Body of pancreas (tissue), 4 donors: ENCODE measurements at regions of chr17 and their contacts with region 1.

Region 1: GRCh38 chr17:77096570-77097214 is 44.1 kb upstream of the SEC14L1 start:
- DNase-seq: peak; percentile 47 to 68 (median 60)
- ATAC-seq: peak; percentile 75
- H3K4me3 ChIP-seq: no peak overlapping the region
- H3K27ac ChIP-seq: peak overlapping the region; percentile 52 to 79 (median 60)
- H3K4me1 ChIP-seq: peaks cover 49% of the 10 kb centered on the region
- H3K27me3 ChIP-seq: no peaks in the 10 kb centered on the region
- CTCF ChIP-seq: peak; percentile 40 to 87 (median 73)
- POLR2A ChIP-seq: no peak

Region 2: DNA sequence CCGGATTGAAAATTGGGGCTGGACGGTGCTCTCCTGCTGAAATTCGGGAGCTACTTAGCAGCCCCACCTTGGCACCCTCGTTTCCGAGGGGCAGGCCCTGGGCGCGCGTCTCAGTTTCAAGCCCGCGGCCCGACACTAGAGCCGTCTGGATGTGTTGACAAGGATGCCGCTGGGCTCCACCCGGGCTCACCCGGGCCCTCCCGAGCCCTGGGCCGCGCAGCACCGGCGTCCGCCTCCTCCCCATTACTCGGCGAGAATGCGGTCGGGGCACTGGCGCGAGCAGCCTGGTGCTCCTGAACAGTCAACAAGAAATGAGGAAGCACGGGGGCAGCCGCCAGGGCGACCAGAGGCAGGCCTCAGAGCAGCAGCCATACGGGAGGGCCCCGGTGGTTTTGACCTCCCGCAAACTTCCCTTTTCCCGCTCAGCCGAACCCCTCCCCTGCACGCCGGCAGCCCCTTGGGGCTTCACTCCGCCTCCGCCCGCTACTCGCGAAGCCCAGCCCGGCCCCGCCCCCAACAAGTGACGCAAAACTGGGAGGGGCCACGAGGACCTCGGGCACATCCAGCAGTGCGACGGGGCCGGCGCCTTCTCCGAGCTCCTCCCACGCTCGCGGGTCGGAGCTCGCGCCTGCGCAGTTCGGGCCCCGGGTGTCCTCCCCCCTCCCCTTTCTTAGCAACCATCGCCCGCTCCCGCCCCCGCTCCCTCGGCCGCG is 43.6 kb after region 1 on chr17:
- intact Hi-C with region 1: loop called (anchors 10 kb)
- DNase-seq: peak; percentile 99 to 100 (median 100)
- ATAC-seq: peak; percentile 95
- H3K4me3 ChIP-seq: peak overlapping the region; percentile 73 to 85
- H3K27ac ChIP-seq: peak overlapping the region; percentile 84 to 97 (median 92)
- H3K4me1 ChIP-seq: peaks cover 43% of the 10 kb centered on the region
- H3K27me3 ChIP-seq: no peaks in the 10 kb centered on the region
- CTCF ChIP-seq: peak in 3 of 7 experiments; percentile 20 to 26 (median 26)
- POLR2A ChIP-seq: peak; percentile 94 to 98 (median 97)